ENCODE measurements at regions of chr15 and their contacts with region 1.

Region 1: DNA sequence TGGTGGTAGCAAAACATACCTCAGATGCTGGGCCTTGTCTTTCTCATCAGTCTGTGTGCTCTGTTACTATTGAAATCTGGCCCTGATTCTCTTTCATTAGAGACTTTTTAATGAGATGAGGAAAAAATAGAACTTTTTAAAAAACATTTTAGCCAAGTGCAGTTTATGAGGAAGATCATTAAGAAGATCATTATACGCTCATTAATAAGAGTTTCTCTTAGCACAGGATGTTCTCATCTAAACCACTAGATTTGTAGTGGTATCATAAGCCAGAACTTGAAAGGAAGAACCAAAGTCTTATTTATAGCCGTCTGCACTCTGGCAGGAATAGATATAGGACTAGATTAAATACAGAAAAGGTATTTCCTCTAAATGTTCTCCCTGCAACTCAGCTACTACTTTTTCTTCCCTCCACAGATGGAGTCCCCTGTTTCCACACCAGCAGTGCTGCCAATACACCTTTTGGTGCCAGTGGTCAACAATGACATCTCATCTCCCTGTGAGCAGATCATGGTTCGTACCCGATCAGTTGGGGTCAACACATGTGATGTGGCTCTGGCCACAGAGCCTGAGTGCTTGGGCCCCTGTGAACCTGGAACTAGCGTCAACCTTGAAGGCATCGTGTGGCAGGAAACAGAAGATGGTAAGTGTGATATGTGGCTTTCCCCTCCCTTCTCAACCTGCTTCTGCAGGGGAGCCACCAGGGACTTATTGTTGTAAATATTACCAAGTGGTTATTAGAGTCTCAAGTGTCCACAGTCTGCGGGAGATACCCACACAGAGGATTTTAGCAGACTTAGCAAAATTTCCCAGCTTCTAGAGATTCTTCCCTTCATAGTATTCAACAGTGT is 152.8 kb downstream of the RBPMS2 start:
- DNase-seq: peak; percentile 63
- H3K4me3 Mint-ChIP-seq: peak overlapping the region; percentile 24
- H3K27ac Mint-ChIP-seq: peak overlapping the region; percentile 90
- H3K4me1 Mint-ChIP-seq: peaks cover 88% of the 10 kb centered on the region
- H3K27me3 Mint-ChIP-seq: no peaks in the 10 kb centered on the region

Region 2: DNA sequence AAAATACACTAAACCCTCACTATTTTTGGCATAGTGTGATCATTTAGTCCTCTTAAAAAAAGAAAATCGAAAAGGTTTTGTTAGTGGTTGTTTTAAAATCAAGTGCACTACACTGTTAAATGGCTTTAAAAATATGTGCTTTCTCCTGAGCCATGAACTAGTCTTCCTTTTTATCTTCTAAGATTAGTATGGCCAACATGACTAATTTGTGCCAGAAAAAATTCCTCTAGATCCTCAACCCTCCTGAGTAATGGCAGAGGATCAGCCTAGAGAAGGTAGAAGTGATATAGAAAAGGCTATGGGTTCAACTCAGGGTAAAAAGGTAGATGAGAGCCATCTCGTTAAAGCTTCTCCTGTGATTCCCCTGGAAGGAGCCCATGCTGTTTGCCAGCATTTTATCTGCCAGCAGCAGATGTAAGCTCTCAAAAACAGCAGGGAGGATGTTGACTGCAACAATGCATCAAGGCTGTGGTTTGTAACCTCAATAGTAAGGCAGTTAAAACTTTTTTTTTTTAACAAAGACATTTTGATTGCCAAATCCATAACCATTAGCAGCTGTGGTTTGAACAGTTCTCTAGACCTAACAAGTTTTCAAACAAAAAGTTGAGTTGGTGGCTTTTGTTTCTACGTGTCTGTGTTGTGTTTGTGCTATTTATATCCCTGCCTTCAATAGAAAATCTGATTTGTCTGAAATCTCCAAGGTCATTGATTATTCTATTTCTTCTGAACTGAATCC is 192.5 kb before region 1 on chr15:
- CTCF ChIA-PET with region 1: no interaction called
- POLR2A ChIA-PET with region 1: no interaction called
- intact Hi-C with region 1: loop called (anchors 2 kb)
- DNase-seq: peak; percentile 45
- H3K4me3 Mint-ChIP-seq: no peak overlapping the region
- H3K27ac Mint-ChIP-seq: peak overlapping the region; percentile 75
- H3K4me1 Mint-ChIP-seq: peaks cover 35% of the 10 kb centered on the region
- H3K27me3 Mint-ChIP-seq: no peaks in the 10 kb centered on the region

Region 3: DNA sequence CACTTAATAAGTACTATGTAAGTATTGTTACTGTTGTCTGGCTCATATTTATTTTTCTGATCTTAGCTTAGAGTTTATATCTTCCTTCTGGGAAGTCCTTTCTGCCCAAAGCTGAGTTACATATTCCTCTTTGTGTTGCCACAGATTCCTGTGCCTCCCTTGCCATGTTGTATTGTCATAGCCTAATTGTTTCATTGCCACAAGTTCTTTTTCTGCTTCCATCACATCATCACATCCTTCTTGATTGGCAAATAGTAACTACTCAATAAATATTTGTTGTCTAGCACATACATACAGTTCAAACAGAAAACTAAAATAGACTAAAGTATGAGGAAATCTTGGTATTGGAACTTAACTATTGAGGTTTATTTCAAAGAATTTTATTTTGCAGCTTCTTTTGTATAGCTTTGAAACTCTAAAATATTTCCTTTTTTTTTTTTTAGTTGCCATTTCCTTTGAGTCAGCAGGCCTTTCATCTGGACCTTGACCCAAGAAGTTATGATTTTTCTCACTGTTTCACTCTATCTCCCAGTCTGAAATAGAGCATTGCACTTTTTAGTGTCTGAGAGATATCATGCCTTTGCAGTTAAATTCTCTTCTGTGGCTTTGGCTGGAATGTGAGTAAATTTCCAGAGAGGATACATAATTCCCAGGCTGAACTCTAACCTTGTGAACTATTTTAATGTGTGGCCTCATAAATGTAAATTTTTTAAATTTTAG is 64.0 kb before region 1 on chr15:
- CTCF ChIA-PET with region 1: no interaction called
- POLR2A ChIA-PET with region 1: no interaction called
- intact Hi-C with region 1: no loop called
- DNase-seq: no peak
- H3K4me3 Mint-ChIP-seq: no peak overlapping the region
- H3K27ac Mint-ChIP-seq: no peak overlapping the region
- H3K4me1 Mint-ChIP-seq: peaks cover 36% of the 10 kb centered on the region
- H3K27me3 Mint-ChIP-seq: no peaks in the 10 kb centered on the region

Region 4: GRCh38 chr15:64582202-64582601 is 40.4 kb before region 1 on chr15:
- CTCF ChIA-PET with region 1: interaction called, 3 read pairs
- POLR2A ChIA-PET with region 1: no interaction called
- intact Hi-C with region 1: loop called (anchors 1 kb)
- DNase-seq: no peak
- H3K4me3 Mint-ChIP-seq: no peak overlapping the region
- H3K27ac Mint-ChIP-seq: no peak overlapping the region
- H3K4me1 Mint-ChIP-seq: peaks cover 34% of the 10 kb centered on the region
- H3K27me3 Mint-ChIP-seq: no peaks in the 10 kb centered on the region

Region 5: DNA sequence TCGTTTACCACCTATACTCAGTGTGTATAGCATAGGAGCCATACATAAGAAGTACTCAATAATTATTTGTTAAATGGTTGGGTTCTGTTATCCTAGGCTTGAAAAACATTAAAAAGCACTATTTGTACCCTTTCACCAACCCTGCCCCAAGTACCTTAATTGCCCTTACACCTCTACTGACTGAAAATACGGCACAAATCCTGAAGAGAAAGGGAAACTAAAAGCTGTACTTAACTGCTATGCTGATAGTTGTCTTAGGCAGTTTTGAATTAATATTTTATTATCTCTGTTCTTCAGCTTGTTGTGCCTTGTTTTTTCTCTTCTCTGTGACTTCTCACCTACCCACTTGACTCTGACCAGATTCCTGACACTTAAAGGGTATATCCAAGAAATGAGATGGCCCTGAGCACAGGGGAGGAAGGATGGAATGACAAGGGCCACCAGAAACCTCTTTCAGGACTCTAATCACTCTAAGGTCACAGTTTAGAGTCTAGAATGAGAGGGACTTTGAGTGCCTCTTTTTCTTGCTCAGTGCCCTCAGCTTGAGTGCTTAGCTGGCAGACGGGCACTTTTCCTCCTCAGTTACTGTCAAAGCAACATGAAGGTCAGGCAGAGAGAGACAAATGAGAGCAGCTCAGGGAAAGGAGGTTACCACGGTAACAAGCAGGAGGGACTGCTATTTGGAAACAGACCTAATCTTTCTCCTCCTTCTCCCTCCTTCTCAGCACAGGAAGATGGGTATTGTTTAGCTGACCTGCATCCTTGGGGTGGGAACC is 25.7 kb before region 1 on chr15:
- CTCF ChIA-PET with region 1: no interaction called
- POLR2A ChIA-PET with region 1: interaction called, 3 read pairs
- intact Hi-C with region 1: loop called (anchors 2 kb)
- DNase-seq: peak; percentile 42
- H3K4me3 Mint-ChIP-seq: peak overlapping the region; percentile 70
- H3K27ac Mint-ChIP-seq: peak overlapping the region; percentile 81
- H3K4me1 Mint-ChIP-seq: peaks cover 53% of the 10 kb centered on the region
- H3K27me3 Mint-ChIP-seq: no peaks in the 10 kb centered on the region

Region 6: DNA sequence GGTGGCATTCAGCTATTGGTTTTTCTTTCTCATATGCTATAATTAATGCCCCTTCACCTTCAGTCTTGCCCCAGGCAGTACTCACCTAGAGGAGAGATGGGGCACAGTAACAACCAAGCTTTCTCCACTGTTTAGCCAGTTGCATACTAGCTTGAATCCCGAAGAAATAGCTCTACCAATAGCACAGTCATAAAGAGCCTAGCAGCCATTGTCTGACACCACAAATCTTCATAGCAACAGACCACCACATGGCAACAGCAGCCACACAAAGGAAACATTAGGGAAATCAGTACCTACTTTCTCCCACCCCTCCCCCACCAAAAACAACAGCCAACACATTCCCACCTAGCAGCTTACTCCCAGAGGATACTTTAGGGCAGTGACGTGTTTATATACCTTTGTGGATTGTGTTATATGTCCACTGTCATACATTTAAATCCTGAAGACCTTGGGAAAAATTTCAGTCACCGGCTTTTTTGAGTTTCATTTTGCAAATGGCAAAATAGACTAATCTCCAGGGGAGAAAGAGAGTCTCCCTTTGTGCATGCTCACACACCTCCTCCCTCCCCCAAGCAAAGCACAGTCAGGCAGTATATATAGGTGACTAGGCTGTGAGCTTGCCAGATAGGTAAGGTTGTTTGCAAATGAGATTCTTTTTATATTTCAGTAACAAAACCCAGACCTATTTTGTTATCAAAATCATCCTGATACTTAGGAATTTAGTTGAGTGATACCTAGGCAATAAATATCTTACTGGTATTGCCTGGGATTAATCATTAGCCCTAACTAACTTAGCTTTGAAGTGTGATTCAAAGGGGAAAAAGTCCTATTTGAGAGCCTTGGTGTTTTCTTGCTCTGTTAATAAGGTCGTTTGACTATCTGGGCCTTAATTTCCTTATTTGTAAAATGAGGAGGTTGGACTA is 12.2 kb after region 1 on chr15:
- CTCF ChIA-PET with region 1: interaction called, 3 read pairs
- POLR2A ChIA-PET with region 1: interaction called, 5 read pairs
- intact Hi-C with region 1: loop called (anchors 1 kb)
- DNase-seq: peak; percentile 69
- H3K4me3 Mint-ChIP-seq: no peak overlapping the region
- H3K27ac Mint-ChIP-seq: peak overlapping the region; percentile 72
- H3K4me1 Mint-ChIP-seq: peaks cover 58% of the 10 kb centered on the region
- H3K27me3 Mint-ChIP-seq: no peaks in the 10 kb centered on the region